ENCODE measurements at regions of chr12 and their contacts with region 1.

Region 1: GRCh38 chr12:31274520-31275300 is 51.2 kb downstream of the SINHCAF start:
- DNase-seq: no peak
- ATAC-seq: no peak
- H3K4me3 Mint-ChIP-seq: no peak overlapping the region
- H3K27ac Mint-ChIP-seq: peak overlapping the region; percentile 7
- H3K4me1 Mint-ChIP-seq: no peaks in the 10 kb centered on the region
- H3K27me3 Mint-ChIP-seq: no peaks in the 10 kb centered on the region

Region 2: DNA sequence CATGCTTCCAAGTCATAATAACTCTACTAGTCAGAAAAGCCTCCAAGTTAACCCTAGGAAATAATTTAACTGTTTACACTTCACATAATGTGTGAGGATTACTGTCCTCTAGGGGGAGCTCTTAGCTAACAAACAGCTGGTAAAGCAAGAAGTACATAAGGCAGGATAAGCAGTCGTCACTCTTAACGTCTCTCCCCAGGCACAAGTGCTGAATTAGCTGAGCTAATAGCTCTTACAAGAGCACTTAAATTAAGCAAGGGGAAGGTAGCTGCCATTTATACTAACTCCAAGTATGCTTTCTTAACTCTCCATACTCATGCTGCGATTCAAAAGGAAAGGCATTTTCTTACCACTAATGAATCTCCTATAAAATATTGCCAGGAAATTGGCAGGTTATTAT is 427.5 kb before region 1 on chr12:
- CTCF ChIA-PET with region 1: interaction called, 44 read pairs
- POLR2A ChIA-PET with region 1: no interaction called
- intact Hi-C with region 1: loop called (anchors 1 kb)
- DNase-seq: peak; percentile 23
- ATAC-seq: peak; percentile 31
- H3K4me3 Mint-ChIP-seq: no peak overlapping the region
- H3K27ac Mint-ChIP-seq: no peak overlapping the region
- H3K4me1 Mint-ChIP-seq: peaks cover 9% of the 10 kb centered on the region
- H3K27me3 Mint-ChIP-seq: peaks cover 4% of the 10 kb centered on the region

Region 3: DNA sequence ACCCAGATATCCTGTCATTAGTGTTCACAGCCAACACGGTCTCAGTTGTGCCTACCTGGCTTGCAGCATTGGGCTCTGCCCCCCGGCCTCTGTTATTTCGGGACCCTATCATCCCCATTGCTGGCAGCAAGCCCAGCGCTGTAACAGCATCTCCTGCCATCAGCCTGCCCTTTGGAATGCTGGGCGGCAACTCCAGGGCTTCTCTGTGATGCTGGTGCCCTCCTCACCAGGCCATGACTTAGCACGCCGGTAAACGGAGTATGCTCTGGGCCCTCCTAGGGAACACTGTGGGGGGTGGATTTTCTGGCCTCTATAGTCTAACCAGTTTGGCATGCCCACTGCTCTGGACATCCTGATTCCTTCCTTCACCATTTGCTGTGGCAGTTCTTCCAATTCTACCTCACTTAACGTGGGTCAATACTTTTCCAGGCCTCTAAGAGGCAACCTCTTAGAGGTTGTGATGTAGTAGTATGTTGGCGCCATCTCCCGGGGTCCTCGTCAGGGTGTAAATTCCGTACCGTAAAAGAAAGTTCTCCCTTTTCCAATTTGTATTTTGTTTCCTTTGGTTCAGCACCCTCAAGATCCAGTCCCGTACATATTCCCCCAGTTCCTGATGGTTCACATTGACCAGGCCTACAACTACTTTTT is 28.8 kb before region 1 on chr12:
- CTCF ChIA-PET with region 1: interaction called, 33 read pairs
- POLR2A ChIA-PET with region 1: no interaction called
- intact Hi-C with region 1: no loop called
- DNase-seq: no peak
- ATAC-seq: no peak
- H3K4me3 Mint-ChIP-seq: no peak overlapping the region
- H3K27ac Mint-ChIP-seq: no peak overlapping the region
- H3K4me1 Mint-ChIP-seq: no peaks in the 10 kb centered on the region
- H3K27me3 Mint-ChIP-seq: no peaks in the 10 kb centered on the region

Region 4: GRCh38 chr12:31288381-31288780 is 13.7 kb after region 1 on chr12:
- CTCF ChIA-PET with region 1: interaction called, 24 read pairs
- POLR2A ChIA-PET with region 1: interaction called, 3 read pairs
- intact Hi-C with region 1: no loop called
- DNase-seq: no peak
- ATAC-seq: no peak
- H3K4me3 Mint-ChIP-seq: no peak overlapping the region
- H3K27ac Mint-ChIP-seq: no peak overlapping the region
- H3K4me1 Mint-ChIP-seq: no peaks in the 10 kb centered on the region
- H3K27me3 Mint-ChIP-seq: no peaks in the 10 kb centered on the region

Region 5: GRCh38 chr12:31362759-31363415 is 88.2 kb after region 1 on chr12:
- CTCF ChIA-PET with region 1: interaction called, 10 read pairs
- POLR2A ChIA-PET with region 1: no interaction called
- intact Hi-C with region 1: no loop called
- DNase-seq: peak; percentile 64
- ATAC-seq: peak; percentile 85
- H3K4me3 Mint-ChIP-seq: peak overlapping the region; percentile 45
- H3K27ac Mint-ChIP-seq: peak overlapping the region; percentile 70
- H3K4me1 Mint-ChIP-seq: peaks cover 14% of the 10 kb centered on the region
- H3K27me3 Mint-ChIP-seq: no peaks in the 10 kb centered on the region

Region 6: DNA sequence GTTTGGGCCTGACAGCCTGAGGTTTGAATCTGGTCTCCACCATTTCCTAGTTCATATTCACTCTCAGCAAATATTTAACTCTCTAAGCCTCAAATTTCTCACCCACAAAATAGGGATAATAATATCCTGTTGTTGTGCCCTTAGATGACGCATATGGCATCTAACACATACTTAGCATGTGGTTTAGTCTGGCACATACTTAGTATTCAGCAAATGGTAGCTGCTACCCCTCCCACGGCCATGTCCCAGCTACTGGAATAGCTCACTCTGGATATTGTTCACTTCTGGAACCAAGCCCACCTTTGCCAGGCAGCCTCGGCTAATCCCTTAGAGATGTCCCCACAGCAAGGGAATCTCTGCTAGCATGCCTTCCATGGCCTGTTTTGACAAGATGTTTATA is 885.2 kb after region 1 on chr12:
- CTCF ChIA-PET with region 1: no interaction called
- POLR2A ChIA-PET with region 1: no interaction called
- intact Hi-C with region 1: no loop called
- DNase-seq: no peak
- ATAC-seq: no peak
- H3K4me3 Mint-ChIP-seq: no peak overlapping the region
- H3K27ac Mint-ChIP-seq: no peak overlapping the region
- H3K4me1 Mint-ChIP-seq: peaks cover 6% of the 10 kb centered on the region
- H3K27me3 Mint-ChIP-seq: no peaks in the 10 kb centered on the region